Endothelial cell of umbilical vein (primary cell): ENCODE measurements at regions of chr11 and their contacts with region 1.

Region 1: GRCh38 chr11:93984196-93984567 is 37.0 kb upstream of the HEPHL1 start:
- DNase-seq: no peak
- H3K4me3 ChIP-seq: no peak overlapping the region
- H3K27ac ChIP-seq: no peak overlapping the region
- H3K4me1 ChIP-seq: no peaks in the 10 kb centered on the region
- H3K27me3 ChIP-seq: no peaks in the 10 kb centered on the region
- CTCF ChIP-seq: no peak
- POLR2A ChIP-seq: no peak

Region 2: DNA sequence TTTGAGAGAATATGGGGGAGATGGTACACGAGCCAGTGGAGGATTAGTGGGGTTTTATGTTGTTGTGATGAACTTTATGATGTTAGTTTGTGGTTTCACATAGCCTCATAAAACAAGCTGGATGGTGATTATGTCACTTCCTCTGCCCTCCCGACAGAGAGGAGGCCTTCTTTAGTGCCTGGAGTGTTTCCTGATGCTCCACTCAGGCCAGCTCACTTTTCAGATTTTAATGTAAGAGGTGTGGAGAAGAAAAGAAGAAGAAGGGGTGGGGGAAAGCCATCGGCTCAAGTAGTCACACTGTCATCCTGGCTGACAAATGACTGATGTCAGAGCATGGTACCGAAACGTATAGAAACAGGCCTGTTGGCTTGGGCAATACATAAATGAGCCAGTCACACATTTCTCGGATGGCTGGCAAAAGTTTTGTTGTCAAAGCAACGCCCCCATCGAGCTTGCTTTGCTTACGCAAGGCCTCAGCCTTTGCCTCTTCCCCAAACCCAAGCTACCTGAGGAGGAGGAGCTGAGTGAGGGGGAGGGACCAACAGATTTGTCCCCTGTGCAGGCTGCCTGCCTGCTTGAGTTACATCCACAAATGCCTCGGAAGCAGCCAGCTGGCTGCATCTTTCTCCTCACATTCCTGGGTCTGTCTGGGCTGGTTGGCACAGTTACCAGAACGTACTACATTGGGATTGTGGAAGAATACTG is 36.7 kb after region 1 on chr11 and contains the start of gene HEPHL1:
- CTCF ChIA-PET with region 1: no interaction called
- POLR2A ChIA-PET with region 1: no interaction called
- dilution Hi-C with region 1: no loop called
- intact Hi-C with region 1: loop called (anchors 5 kb)
- DNase-seq: no peak
- H3K4me3 ChIP-seq: no peak within 1 kb of the TSS
- H3K27ac ChIP-seq: no peak within 1 kb of the TSS
- H3K4me1 ChIP-seq: no peaks in the 10 kb centered on the region
- H3K27me3 ChIP-seq: no peaks in the 10 kb centered on the region
- CTCF ChIP-seq: no peak
- POLR2A ChIP-seq: no peak
- total RNA-seq, gene HEPHL1: not detected in 2 replicates